Head of caudate nucleus (tissue), 42 donors: ENCODE measurements at regions of chr1 and their contacts with region 1.

Region 1: DNA sequence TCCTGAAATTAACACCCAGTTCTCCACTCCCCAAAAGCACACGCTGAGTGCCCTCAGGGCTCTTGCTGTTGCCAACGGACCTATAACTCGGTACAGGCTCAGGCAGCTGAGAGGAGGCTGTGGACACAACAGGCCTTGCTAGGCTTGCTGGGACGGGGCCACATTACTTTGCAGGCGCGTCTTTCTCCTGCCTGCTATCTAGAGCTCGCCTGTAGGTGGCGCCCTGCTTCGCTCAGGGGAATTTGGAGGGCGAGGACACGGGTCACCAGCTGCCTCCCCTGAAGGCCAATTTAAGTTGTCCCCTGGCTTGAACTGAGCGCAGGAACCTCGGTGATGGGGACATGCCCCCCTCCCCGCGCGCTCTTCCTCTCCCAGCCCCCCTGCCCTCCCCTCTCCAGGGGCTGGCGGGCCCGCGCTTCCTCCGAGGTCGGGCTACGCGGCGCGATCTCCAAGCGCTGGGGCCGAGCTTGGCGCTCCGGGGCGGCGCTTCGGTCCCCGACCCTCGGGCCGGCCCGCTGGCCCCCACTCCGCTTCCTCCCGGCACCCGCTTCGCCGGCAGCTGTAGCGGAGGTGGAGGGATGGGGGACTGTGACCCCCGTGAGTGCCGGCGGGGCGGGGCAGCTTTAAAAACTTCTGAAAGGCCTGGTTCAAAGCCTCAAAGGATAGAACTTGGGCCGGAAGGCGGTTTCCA is 32.4 kb upstream of the NFIA start:
- DNase-seq: peak; percentile 82 to 98 (median 95)

Region 2: GRCh38 chr1:59971464-59971911 is 1078.5 kb before region 1 on chr1:
- intact Hi-C with region 1: loop called (anchors 10 kb)
- DNase-seq: peak; percentile 49 to 91 (median 81)

Region 3: DNA sequence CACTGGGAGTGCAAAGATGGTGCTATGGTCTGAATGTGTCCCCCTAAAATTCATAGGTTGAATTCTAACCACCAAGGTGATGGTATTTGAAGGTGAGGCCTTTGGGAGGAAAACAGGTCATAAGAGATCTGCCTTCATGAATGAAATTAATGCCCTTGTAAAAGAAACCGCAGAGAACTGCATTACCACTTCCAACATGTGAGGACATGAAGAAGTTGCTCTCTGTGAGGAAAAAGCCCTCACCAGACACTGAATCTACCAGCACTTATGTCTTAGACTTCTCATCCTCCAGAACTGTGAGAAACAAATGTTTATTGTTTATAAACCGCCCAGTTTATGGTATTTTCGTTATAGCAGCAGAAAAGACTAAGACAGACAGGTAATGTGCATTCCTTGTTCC is 751.7 kb before region 1 on chr1:
- intact Hi-C with region 1: no loop called
- DNase-seq: no peak

Region 4: DNA sequence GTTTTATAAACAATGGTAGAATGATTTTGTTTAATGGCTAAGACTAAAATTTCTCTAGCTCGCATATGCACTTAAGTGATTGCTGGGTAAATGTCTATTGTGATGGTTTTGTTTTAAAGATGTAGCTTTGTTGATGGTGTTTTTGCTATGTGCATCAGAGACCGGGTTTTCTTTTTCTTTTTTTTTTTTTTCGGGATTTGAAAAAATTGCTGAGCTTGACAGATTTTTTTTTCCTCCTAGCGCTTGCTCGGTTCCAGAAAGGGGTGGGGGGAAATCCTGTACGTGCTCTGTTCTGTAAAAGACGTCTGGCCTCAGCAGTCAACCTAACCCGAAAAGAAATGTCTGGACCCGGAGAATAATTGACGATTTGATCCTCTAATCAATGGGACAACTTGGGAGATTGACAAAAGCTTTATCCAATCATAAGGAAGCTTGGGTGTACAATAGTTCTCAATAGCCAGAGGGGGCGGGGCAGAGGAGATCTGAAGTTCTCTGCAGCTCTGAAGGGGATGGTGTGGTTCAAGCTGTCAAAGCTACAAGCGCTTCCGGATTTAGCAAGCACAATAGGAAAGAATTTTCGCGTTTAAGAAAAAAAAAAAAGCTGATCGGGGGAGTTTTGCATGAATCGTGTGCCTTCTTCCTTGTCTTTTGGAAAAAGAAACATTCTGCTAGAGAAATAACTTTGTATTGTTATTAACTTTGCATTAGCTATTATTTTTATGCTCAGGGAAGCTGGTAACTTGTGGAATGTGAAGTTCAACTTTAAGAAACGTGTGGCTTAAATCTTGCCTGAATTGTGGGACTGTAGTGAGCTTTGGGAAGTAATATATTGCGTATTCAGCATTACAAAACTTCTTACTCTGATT is 27.9 kb after region 1 on chr1:
- intact Hi-C with region 1: loop called (anchors 2 kb)
- DNase-seq: peak; percentile 73 to 97 (median 90)

Region 5: DNA sequence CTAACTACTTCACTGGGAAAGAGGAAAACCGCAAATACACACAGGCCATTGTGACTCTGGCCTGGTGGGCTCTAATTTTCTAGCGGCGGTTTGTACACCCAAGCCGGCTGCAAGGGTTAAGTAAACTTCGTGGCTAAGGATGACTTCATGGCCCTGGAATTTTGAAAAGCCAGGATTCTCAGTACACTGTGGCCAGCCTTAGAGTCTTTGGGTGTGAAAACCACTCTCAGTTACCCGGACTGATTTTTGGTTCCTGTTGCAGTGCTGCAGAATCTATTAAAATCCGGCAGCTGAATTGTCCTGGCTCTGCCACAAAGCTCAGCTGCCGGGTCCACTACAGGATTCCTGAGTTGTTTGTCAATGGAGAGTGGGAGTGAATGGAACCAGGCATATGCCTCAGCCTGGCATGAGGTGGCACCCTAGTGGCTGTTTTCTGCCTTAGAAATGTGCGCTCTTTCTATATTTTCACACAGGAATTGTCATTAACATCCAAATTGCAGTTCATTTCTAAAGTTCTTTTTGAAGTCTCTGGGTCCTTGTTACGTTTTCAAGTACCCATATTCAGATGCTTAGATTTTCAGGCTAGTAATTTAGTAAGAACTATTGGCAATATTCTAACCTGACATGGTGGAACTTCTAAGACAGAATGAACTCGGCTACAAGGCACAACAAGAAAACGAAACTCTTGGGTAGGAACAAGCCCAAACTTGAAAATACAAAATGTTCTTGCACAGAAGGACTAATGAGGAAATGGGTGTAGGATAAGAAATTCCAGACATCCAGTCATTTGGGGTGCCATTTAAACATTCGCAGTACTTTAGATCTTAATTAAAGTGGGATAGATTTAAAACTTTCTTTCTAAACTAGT is 288.2 kb after region 1 on chr1:
- intact Hi-C with region 1: loop called (anchors 5 kb)
- DNase-seq: peak; percentile 52 to 93 (median 82)

Region 6: DNA sequence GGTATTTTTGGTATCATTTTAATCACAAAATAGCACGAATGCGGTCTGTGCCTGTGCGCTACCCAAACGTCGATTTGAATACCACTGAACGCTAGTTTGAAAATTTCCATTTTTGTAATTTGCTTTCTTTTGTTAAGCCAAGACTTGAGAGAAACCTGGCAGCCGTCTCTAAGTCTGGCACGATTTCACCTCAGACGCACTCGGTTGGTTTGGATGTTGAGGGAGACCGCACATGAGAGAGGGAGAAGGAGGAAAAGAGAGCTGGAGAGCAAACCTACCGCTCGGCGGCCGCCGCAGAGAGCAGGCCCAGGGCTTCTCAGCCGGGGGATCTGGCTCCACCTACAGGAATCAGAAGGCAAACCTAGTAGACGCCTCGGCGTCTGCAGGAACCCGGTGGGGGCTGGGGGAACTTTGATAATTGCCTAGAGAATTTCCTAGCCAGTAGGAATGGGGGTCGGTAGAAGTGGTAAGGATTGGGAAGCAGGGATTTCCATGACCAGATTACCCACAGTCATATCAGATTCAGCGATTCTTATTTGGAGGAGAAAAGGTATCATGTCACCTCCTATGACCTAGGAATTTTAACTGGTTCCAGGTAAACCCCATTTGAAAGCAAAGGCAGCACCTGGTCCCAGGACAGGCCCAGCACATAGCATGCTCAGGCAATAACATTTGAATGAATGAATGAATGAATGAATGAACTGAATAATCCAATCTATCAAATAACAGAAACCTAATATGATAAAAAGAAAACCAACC is 591.8 kb after region 1 on chr1:
- intact Hi-C with region 1: loop called (anchors 10 kb)
- DNase-seq: peak; percentile 65 to 92 (median 82)